ENCODE measurements at regions of chr10 and their contacts with region 1.

Region 1: GRCh38 chr10:98170249-98171117 is 36.0 kb downstream of the R3HCC1L start:
- DNase-seq: no peak

Region 2: GRCh38 chr10:97475936-97476594 is 694.4 kb before region 1 on chr10:
- intact Hi-C with region 1: no loop called
- DNase-seq: no peak

Region 3: DNA sequence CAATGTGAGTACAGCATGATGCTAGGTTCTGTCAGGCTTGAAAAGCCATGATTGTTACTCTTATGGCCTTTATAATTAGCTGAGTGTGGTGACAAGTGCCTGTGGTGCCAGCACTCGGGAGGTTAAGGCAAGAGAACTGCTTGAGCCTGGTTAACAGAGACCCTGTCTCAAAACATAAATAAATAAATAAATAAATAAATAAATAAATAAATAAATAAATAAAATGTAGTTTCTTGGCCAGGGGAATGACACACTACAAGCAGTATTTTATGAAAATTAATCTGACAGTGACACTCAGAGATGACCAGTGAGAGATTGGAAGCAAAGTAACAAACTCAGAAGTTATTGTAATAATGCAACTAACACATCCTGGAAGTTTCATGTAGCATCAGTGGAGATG is 534.9 kb before region 1 on chr10:
- intact Hi-C with region 1: loop called in 1 of 2 experiments (anchors 5 kb)
- DNase-seq: no peak

Measured in posterior vena cava (tissue), 2 donors.